ENCODE measurements at regions of chr4 and their contacts with region 1.

Region 1: DNA sequence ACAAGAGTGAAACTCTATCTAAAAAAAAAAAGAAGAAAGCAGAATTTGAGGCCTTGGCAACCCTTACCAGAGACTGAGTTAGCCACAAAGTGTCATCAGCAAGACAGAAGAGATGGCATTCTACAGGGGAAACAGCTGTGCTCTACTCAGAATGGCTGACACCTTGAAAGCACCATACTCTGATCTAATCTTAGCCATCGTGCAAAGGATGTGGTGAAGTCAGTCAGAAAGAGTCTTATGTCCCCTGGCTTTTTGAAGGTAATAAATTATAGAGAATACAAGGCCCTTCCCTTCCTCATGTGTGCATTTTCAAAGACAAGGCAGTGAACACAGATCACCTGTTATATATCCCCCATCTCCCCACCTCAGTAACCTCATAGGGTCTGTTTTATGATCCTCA is 13.2 kb downstream of the CLNK start:
- DNase-seq: peak; percentile 92
- ATAC-seq: peak; percentile 84
- H3K4me3 ChIP-seq: no peak overlapping the region
- H3K27ac ChIP-seq: peak overlapping the region; percentile 57
- H3K4me1 ChIP-seq: peaks cover 29% of the 10 kb centered on the region
- H3K27me3 ChIP-seq: no peaks in the 10 kb centered on the region
- CTCF ChIP-seq: no peak
- EP300 ChIP-seq: no peak; a peak in 1 of 4 replicates
- POLR2A ChIP-seq: no peak
- RAD21 ChIP-seq: peak; percentile 24; the same call in 1 of the 2 replicates

Region 2: GRCh38 chr4:10684631-10685030 is 13.3 kb after region 1 on chr4 and contains the start of gene CLNK:
- CTCF ChIA-PET with region 1: interaction called, 9 read pairs
- POLR2A ChIA-PET with region 1: interaction called, 8 read pairs
- RAD21 ChIA-PET with region 1: interaction called, 20 read pairs
- SMC1A ChIA-PET with region 1: interaction called, 139 read pairs
- in situ Hi-C with region 1: no loop called
- intact Hi-C with region 1: no loop called
- DNase-seq: peak; percentile 77
- ATAC-seq: peak; percentile 77
- H3K4me3 ChIP-seq: peak within 1 kb of the TSS; percentile 52
- H3K27ac ChIP-seq: peak within 1 kb of the TSS; percentile 80
- H3K4me1 ChIP-seq: peaks cover 27% of the 10 kb centered on the region
- H3K27me3 ChIP-seq: no peaks in the 10 kb centered on the region
- CTCF ChIP-seq: no peak
- EP300 ChIP-seq: no peak
- POLR2A ChIP-seq: peak; percentile 52; the same call in 1 of the 2 replicates
- RAD21 ChIP-seq: peak; percentile 23; the same call in 1 of the 2 replicates
- polyA plus RNA-seq, gene CLNK: 2.1 to 2.6 TPM

Region 3: DNA sequence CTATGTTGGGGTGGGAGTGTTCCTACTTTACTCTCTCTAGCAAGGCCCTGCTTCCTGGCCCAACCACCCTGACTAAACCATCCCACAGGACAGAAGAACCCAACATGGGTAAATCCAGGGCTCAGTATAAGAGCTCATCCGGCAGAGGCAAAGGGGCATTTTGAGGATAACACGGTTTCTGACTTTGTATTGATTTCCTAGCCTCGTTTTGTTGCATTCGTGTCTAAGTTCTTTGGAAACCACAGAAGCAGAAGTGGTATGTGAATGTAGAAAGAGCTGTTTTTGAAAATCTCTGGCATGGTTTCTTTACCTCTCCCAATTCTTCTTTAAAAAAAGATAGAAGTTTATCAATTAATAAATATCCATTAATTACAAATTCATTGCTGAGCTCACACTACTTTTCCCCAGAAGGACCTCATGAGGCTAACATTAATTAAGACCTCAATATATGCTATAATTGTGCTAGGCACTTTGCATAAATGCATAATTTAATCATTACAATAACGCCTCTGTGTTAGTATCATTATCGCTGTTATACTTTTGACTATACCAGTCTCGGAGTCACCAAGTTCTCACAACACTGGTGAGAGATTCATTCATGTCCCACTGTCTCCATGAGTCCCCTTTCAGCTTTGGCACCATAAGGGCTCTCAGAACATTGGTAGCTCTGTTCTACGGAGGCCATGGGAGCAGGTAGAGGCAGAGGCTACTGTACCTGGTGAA is 19.0 kb after region 1 on chr4:
- CTCF ChIA-PET with region 1: interaction called, 9 read pairs
- POLR2A ChIA-PET with region 1: interaction called, 8 read pairs
- RAD21 ChIA-PET with region 1: interaction called, 13 read pairs
- SMC1A ChIA-PET with region 1: interaction called, 139 read pairs
- in situ Hi-C with region 1: no loop called
- intact Hi-C with region 1: no loop called
- DNase-seq: no peak
- ATAC-seq: peak; percentile 52
- H3K4me3 ChIP-seq: no peak overlapping the region
- H3K27ac ChIP-seq: peak overlapping the region; percentile 71
- H3K4me1 ChIP-seq: peaks cover 35% of the 10 kb centered on the region
- H3K27me3 ChIP-seq: no peaks in the 10 kb centered on the region
- CTCF ChIP-seq: no peak
- EP300 ChIP-seq: no peak
- POLR2A ChIP-seq: no peak
- RAD21 ChIP-seq: no peak

Measured in GM12878 (cell line).